Naive thymus-derived CD4-positive, alpha-beta T cell (primary cell): ENCODE measurements at regions of chr16 and their contacts with region 1.

Region 1: GRCh38 chr16:589658-590159 is at the start of gene RAB40C:
- DNase-seq: peak; percentile 96 to 99 (median 99)
- ATAC-seq: peak; percentile 91
- H3K4me3 ChIP-seq: peak within 1 kb of the TSS; percentile 93
- H3K4me3 Mint-ChIP-seq: peak within 1 kb of the TSS; percentile 86 to 100 (median 98)
- H3K27ac ChIP-seq: peak within 1 kb of the TSS; percentile 93
- H3K27ac Mint-ChIP-seq: peak within 1 kb of the TSS; percentile 95 to 100 (median 99)
- H3K4me1 ChIP-seq: peaks cover 15 to 17% of the 10 kb centered on the region in 2 donors
- H3K4me1 Mint-ChIP-seq: peaks cover 25 to 50% (median 45%) of the 10 kb centered on the region in 7 donors
- H3K27me3 ChIP-seq: no peaks in the 10 kb centered on the region
- H3K27me3 Mint-ChIP-seq: no peaks in the 10 kb centered on the region
- total RNA-seq, gene RAB40C: 15.8 to 23.2 (median 17.8) TPM

Region 2: GRCh38 chr16:381789-382717 is 207.7 kb before region 1 on chr16 and contains the start of gene PGAP6:
- CTCF ChIA-PET with region 1: no interaction called
- POLR2A ChIA-PET with region 1: no interaction called
- intact Hi-C with region 1: loop called in 1 of 2 experiments (anchors 5 kb)
- DNase-seq: peak; percentile 36 to 83 (median 51)
- ATAC-seq: peak; percentile 83
- H3K4me3 ChIP-seq: peak within 1 kb of the TSS; percentile 79
- H3K4me3 Mint-ChIP-seq: peak within 1 kb of the TSS; percentile 85 to 97 (median 90)
- H3K27ac ChIP-seq: peak within 1 kb of the TSS; percentile 81
- H3K27ac Mint-ChIP-seq: peak within 1 kb of the TSS; percentile 58 to 98 (median 90)
- H3K4me1 ChIP-seq: peaks cover 18 to 23% of the 10 kb centered on the region in 2 donors
- H3K4me1 Mint-ChIP-seq: peaks cover 7 to 32% (median 21%) of the 10 kb centered on the region in 7 donors
- H3K27me3 ChIP-seq: no peaks in the 10 kb centered on the region
- H3K27me3 Mint-ChIP-seq: peaks cover 0 to 11% (median 0%) of the 10 kb centered on the region in 5 donors
- total RNA-seq, gene PGAP6: 32.2 to 107 (median 89.4) TPM

Region 3: DNA sequence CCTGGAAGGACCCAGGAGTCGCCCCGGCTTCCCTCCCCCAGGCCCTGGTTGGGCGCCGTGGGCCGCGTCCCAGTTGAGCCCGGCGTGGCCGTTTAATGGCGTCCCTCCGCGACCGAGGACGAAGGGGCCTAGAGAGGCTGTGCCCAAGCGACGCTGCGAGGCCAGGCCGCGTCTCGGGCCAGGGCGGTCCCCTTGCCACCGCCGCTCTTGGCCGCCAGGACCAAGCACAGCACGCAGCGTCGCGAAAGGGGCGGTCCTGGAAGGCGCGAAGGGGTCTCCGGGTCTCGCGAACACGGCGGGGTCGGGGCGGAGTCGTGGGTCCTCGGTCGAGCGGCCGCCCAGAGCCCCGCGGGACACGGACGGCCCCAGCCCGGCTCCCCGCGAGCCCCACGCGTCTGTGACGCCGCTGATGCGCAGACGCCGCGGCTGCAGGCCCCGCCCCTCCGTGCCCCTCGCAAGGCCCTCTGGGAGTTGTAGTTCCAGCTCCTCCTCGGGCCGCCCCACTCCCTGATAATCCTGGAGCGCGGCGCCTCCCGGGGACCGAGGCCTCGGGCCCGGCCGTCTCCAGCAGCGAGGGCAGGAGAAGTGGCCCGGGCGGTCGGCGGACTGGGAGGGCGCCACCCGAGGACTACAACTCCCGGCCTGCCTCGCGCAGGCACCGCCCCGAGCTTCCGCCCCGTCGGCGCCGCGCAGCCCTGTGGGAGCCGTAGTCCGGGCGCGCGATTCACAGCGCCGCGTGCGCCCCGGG is 62.5 kb before region 1 on chr16 and contains the start of gene CAPN15:
- CTCF ChIA-PET with region 1: no interaction called
- POLR2A ChIA-PET with region 1: no interaction called
- intact Hi-C with region 1: loop called (anchors 1 kb)
- DNase-seq: peak; percentile 79 to 93 (median 89)
- ATAC-seq: peak; percentile 91
- H3K4me3 ChIP-seq: peak within 1 kb of the TSS; percentile 78
- H3K4me3 Mint-ChIP-seq: peak within 1 kb of the TSS; percentile 83 to 93 (median 88)
- H3K27ac ChIP-seq: peak within 1 kb of the TSS; percentile 97
- H3K27ac Mint-ChIP-seq: peak within 1 kb of the TSS; percentile 68 to 93 (median 83)
- H3K4me1 ChIP-seq: peaks cover 26 to 28% of the 10 kb centered on the region in 2 donors
- H3K4me1 Mint-ChIP-seq: peaks cover 21 to 38% (median 30%) of the 10 kb centered on the region in 7 donors
- H3K27me3 ChIP-seq: no peaks in the 10 kb centered on the region
- H3K27me3 Mint-ChIP-seq: no peaks in the 10 kb centered on the region
- total RNA-seq, gene CAPN15: 51.0 to 89.8 (median 55.6) TPM

Region 4: DNA sequence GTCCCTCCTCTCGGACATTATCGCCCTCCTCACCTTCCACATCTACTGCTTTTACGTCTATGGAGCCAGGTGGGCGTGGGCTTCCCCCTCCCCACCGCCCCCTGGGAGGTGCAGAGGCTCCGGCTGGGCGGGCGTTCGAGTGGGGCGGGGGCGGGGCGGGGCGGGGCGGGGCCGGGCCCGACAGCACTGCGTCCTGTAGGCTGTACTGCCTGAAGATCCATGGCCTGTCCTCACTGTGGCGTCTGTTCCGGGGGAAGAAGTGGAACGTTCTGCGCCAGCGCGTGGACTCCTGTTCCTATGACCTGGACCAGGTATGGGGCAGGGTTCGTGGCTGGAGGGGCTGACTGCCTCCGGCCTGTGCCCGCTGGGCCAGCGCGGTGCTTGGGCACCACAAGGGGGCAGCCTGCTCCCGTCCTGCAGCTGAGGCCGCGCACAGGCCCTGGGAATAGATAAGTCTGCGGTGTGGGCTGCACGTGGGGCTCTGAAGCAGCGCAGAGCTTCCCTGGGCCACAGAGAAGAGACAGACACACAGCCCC is 10.8 kb before region 1 on chr16:
- CTCF ChIA-PET with region 1: no interaction called
- POLR2A ChIA-PET with region 1: interaction called, 4 read pairs
- intact Hi-C with region 1: loop called in 1 of 2 experiments (anchors 1 kb)
- DNase-seq: peak; percentile 47 to 77 (median 58)
- ATAC-seq: peak; percentile 94
- H3K4me3 ChIP-seq: no peak overlapping the region
- H3K4me3 Mint-ChIP-seq: no peak overlapping the region
- H3K27ac ChIP-seq: no peak overlapping the region
- H3K27ac Mint-ChIP-seq: no peak overlapping the region
- H3K4me1 ChIP-seq: no peaks in the 10 kb centered on the region
- H3K4me1 Mint-ChIP-seq: peaks cover 0 to 6% (median 0%) of the 10 kb centered on the region in 7 donors
- H3K27me3 ChIP-seq: no peaks in the 10 kb centered on the region
- H3K27me3 Mint-ChIP-seq: no peaks in the 10 kb centered on the region

Region 5: DNA sequence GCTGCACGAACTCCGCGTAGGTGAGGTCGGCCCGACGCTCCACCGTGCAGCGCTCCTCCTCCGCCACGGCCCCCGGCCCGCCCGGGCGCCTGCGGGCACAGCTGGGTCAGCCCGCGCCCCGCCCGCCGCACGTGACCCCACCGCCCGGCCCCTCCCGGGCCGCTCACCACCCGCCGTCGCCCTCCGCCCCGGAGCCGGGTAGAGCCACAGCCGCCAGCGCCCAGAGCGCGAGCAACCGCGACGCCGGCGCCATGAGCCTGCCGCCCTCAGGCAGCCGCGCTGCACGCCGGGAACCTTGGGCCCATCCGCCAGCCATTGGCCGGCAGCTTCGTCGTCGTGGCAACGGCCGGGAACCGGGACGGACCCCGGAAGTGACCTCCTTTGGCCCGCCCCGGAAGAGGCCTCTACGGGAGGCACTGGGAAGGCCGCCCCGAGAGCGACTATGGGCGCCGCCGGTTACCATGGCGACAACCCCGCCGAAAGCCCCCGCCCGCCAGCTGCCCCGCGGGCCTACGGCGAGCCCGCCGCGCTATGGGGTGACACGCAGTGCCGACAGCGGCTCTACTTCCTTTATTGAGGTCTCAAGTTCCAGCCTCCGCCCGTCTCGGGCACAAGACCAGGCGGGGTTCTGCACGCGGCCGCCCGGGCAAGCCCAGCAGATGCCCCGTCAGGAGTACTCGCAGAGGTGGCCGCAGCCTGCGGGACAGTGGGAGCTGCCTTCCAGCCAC is 94.5 kb after region 1 on chr16 and contains the start of gene JMJD8:
- CTCF ChIA-PET with region 1: no interaction called
- POLR2A ChIA-PET with region 1: interaction called, 3 read pairs
- intact Hi-C with region 1: loop called (anchors 1 kb)
- DNase-seq: peak; percentile 88 to 97 (median 91)
- ATAC-seq: peak; percentile 75
- H3K4me3 ChIP-seq: peak within 1 kb of the TSS; percentile 52
- H3K4me3 Mint-ChIP-seq: peak within 1 kb of the TSS; percentile 58 to 87 (median 76)
- H3K27ac ChIP-seq: peak within 1 kb of the TSS; percentile 78
- H3K27ac Mint-ChIP-seq: peak within 1 kb of the TSS in 6 of 9 donors; percentile 38 to 82 (median 58)
- H3K4me1 ChIP-seq: peaks cover 9 to 36% of the 10 kb centered on the region in 2 donors
- H3K4me1 Mint-ChIP-seq: peaks cover 10 to 31% (median 22%) of the 10 kb centered on the region in 7 donors
- H3K27me3 ChIP-seq: no peaks in the 10 kb centered on the region
- H3K27me3 Mint-ChIP-seq: no peaks in the 10 kb centered on the region
- total RNA-seq, gene JMJD8: 26.8 to 48.1 (median 37.2) TPM

Region 6: GRCh38 chr16:914440-914839 is 324.7 kb after region 1 on chr16:
- CTCF ChIA-PET with region 1: no interaction called
- POLR2A ChIA-PET with region 1: no interaction called
- intact Hi-C with region 1: no loop called
- DNase-seq: no peak
- ATAC-seq: peak; percentile 52
- H3K4me3 ChIP-seq: no peak overlapping the region
- H3K4me3 Mint-ChIP-seq: no peak overlapping the region
- H3K27ac ChIP-seq: no peak overlapping the region
- H3K27ac Mint-ChIP-seq: no peak overlapping the region
- H3K4me1 ChIP-seq: no peaks in the 10 kb centered on the region
- H3K4me1 Mint-ChIP-seq: no peaks in the 10 kb centered on the region
- H3K27me3 ChIP-seq: no peaks in the 10 kb centered on the region
- H3K27me3 Mint-ChIP-seq: no peaks in the 10 kb centered on the region

Region 7: GRCh38 chr16:1782352-1783091 is 1192.8 kb after region 1 on chr16 and contains the starts of genes NUBP2 and SPSB3:
- CTCF ChIA-PET with region 1: no interaction called
- POLR2A ChIA-PET with region 1: no interaction called
- intact Hi-C with region 1: loop called in 1 of 2 experiments (anchors 10 kb)
- DNase-seq: peak; percentile 83 to 98 (median 97)
- ATAC-seq: peak; percentile 92
- H3K4me3 ChIP-seq: peak within 1 kb of the TSS; percentile 92
- H3K4me3 Mint-ChIP-seq: peak within 1 kb of the TSS; percentile 90 to 98 (median 94)
- H3K27ac ChIP-seq: peak within 1 kb of the TSS; percentile 76
- H3K27ac Mint-ChIP-seq: peak within 1 kb of the TSS; percentile 77 to 98 (median 93)
- H3K4me1 ChIP-seq: peaks cover 13 to 28% of the 10 kb centered on the region in 2 donors
- H3K4me1 Mint-ChIP-seq: peaks cover 0 to 48% (median 22%) of the 10 kb centered on the region in 7 donors
- H3K27me3 ChIP-seq: no peaks in the 10 kb centered on the region
- H3K27me3 Mint-ChIP-seq: peaks cover 0 to 2% (median 0%) of the 10 kb centered on the region in 5 donors
- total RNA-seq, gene NUBP2: 39.3 to 60.2 (median 48.6) TPM
- total RNA-seq, gene SPSB3: 38.2 to 127 (median 72.3) TPM